SK-N-SH (cell line): ENCODE measurements at regions of chr14 and their contacts with region 1.

Region 1: DNA sequence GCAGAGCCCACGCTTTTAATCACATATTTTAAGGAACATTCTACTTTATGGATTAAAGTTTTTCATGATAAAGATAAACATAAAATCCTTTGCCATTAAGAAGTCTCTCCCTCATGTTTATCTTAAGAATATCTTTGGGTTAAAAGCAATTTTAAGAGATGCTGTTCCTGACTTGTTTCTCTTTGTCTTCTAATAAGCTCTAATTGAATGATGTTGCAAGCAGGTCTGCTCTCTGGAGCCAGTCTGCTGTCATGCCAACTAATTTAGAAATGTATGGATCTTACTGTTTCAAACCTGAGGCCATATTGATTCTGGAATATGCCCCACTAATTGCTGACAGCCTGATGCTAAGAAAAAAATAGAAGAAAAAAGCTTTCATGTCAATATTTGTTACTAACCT is 173.6 kb downstream of the TTC8 start:
- DNase-seq: peak; percentile 60
- H3K4me3 ChIP-seq: no peak overlapping the region
- H3K27ac ChIP-seq: peak overlapping the region; percentile 23 to 100; a peak in 3 of 4 replicates
- H3K4me1 ChIP-seq: peaks cover 9 to 53% of the 10 kb centered on the region in 2 experiments; a peak in 3 of 4 replicates
- H3K27me3 ChIP-seq: no peaks in the 10 kb centered on the region
- CTCF ChIP-seq: no peak
- EP300 ChIP-seq: peak; percentile 47 to 99; a peak in 3 of 4 replicates
- RAD21 ChIP-seq: 0 out of 2 replicates have a peak, but pooled peaks have one; percentile 3

Region 2: DNA sequence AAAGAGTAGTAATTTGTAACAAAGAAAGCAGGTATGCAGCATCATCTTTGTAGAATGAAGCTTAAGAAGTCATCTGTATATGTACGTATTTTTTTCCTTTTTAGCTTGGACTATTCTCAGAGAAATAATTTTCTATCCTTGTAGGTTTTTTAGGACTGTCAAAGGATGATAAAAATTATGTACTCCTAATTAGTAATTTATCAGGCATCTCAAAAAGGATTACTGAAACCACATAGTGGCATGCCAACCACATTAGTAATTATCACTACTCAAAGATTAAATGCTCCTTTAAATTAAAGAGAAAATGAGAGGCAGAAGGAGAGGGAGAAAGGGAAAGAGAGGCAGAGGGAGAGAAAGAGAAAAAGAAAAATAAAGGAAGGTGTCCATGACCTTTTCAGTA is 156.3 kb before region 1 on chr14:
- CTCF ChIA-PET with region 1: no interaction called
- POLR2A ChIA-PET with region 1: no interaction called
- DNase-seq: no peak
- H3K4me3 ChIP-seq: no peak overlapping the region
- H3K27ac ChIP-seq: peak overlapping the region in 1 of 2 experiments; percentile 93; a peak in 2 of 4 replicates
- H3K4me1 ChIP-seq: peaks cover 7 to 30% of the 10 kb centered on the region in 2 experiments; a peak in 3 of 4 replicates
- H3K27me3 ChIP-seq: no peaks in the 10 kb centered on the region
- CTCF ChIP-seq: no peak
- EP300 ChIP-seq: no peak
- RAD21 ChIP-seq: no peak

Region 3: GRCh38 chr14:88986146-88986841 is 11.7 kb before region 1 on chr14:
- CTCF ChIA-PET with region 1: interaction called, 6 read pairs
- POLR2A ChIA-PET with region 1: interaction called, 24 read pairs
- DNase-seq: peak; percentile 69
- H3K4me3 ChIP-seq: no peak overlapping the region
- H3K27ac ChIP-seq: peak overlapping the region; percentile 84 to 100
- H3K4me1 ChIP-seq: peaks cover 0 to 59% of the 10 kb centered on the region in 2 experiments; a peak in 2 of 4 replicates
- H3K27me3 ChIP-seq: no peaks in the 10 kb centered on the region
- CTCF ChIP-seq: no peak
- EP300 ChIP-seq: peak; percentile 33 to 78; a peak in 3 of 4 replicates
- RAD21 ChIP-seq: peak; percentile 2; the same call in 1 of the 2 replicates